ENCODE measurements at regions of chr5 and their contacts with region 1.

Region 1: DNA sequence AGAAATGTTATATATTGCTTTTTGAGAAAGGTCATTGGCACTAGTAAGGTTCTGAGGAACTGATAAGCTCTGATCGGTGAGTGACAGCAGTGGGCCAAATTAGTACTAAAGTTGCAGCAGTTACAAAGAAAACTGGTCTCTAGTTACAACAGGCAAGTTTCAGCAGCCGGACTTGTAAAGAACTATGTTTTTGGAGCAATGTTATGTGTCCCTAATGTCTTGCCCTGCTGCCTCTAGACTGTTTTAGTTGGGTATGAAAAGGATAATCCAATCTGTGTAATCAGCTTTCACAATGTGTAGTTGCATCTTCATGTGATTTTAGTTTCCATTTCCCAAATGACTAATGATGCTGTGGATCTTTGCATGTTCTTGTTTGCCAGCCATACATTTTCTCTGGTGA is 113.5 kb downstream of the CAMK4 start:
- DNase-seq: peak; percentile 10
- H3K4me3 Mint-ChIP-seq: peak overlapping the region; percentile 11
- H3K27ac Mint-ChIP-seq: peak overlapping the region; percentile 78
- H3K4me1 Mint-ChIP-seq: peaks cover 74% of the 10 kb centered on the region
- H3K27me3 Mint-ChIP-seq: no peaks in the 10 kb centered on the region

Region 2: DNA sequence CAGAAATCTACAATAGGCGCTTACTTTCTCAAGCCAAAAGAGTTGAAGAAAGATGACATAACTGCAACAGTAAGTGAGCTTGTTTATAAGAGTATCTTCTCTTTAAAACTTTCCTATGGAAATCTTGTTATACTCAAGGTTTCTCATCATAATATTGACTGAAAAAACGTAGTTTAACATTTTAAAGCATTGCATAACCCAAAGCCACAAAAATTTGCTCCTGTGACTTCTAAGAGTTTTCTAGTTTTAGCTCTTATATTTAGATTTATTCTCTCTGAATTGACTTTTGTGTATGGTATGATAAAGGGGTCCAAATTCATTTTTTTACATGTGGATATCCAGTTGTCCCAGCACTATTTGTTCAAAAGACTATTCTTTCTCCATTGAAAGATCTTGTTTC is 230.3 kb before region 1 on chr5:
- CTCF ChIA-PET with region 1: no interaction called
- intact Hi-C with region 1: no loop called
- DNase-seq: no peak
- H3K4me3 Mint-ChIP-seq: no peak overlapping the region
- H3K27ac Mint-ChIP-seq: no peak overlapping the region
- H3K4me1 Mint-ChIP-seq: peaks cover 4% of the 10 kb centered on the region
- H3K27me3 Mint-ChIP-seq: no peaks in the 10 kb centered on the region

Region 3: DNA sequence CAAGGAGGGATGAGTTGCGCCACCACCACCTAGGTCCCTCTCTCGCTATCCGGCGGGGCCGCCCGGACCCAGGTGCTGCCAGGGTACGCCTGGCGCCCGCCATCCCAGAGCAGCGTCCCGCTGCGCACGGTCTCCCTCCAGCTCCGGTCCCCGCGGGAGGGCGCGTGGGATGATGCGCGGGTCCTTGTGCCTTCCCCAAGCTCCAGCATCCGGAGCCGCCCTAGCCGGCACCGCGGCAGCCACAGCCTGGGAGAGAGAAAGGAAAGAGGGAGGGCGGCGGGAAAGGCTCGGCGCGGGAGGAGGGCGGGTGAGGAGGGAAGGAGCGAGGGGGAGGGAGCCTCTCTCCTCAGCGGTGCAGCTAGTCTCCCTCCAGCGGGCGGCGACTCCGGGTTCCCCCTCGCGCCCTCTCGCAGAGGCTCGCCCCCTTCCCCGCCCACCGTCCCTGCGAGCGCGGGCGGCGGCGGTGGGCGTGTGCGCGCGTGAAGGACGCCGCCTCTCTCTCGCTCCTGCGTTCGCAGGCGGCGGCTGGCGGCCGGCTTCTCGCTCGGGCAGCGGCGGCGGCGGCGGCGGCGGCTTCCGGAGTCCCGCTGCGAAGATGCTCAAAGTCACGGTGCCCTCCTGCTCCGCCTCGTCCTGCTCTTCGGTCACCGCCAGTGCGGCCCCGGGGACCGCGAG is 113.7 kb before region 1 on chr5 and contains the start of gene CAMK4:
- CTCF ChIA-PET with region 1: no interaction called
- intact Hi-C with region 1: loop called (anchors 2 kb)
- DNase-seq: peak; percentile 75
- H3K4me3 Mint-ChIP-seq: peak within 1 kb of the TSS; percentile 95
- H3K27ac Mint-ChIP-seq: peak within 1 kb of the TSS; percentile 97
- H3K4me1 Mint-ChIP-seq: peaks cover 25% of the 10 kb centered on the region
- H3K27me3 Mint-ChIP-seq: no peaks in the 10 kb centered on the region
- total RNA-seq, gene CAMK4: 40.6 to 44.4 TPM

Region 4: DNA sequence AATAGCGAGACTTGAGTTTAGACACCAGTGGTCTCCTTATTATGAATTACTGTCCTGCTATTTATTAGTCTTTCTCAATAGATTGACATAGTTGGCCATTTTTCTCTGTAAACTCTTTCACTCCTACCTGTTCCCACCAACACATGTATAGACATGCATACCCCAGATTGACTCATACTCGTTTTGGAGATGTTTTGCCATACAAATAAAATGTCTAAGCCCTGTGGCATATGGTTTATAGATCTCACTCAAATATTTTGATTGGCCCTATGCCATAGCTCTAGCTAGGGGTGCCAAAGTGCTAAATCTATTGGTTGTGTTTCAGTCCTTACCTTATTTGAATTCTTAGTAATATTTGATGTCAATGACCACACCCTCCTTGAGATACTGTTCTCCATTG is 71.2 kb before region 1 on chr5:
- CTCF ChIA-PET with region 1: no interaction called
- intact Hi-C with region 1: loop called (anchors 2 kb)
- DNase-seq: no peak
- H3K4me3 Mint-ChIP-seq: no peak overlapping the region
- H3K27ac Mint-ChIP-seq: peak overlapping the region; percentile 4
- H3K4me1 Mint-ChIP-seq: peaks cover 50% of the 10 kb centered on the region
- H3K27me3 Mint-ChIP-seq: no peaks in the 10 kb centered on the region

Region 5: DNA sequence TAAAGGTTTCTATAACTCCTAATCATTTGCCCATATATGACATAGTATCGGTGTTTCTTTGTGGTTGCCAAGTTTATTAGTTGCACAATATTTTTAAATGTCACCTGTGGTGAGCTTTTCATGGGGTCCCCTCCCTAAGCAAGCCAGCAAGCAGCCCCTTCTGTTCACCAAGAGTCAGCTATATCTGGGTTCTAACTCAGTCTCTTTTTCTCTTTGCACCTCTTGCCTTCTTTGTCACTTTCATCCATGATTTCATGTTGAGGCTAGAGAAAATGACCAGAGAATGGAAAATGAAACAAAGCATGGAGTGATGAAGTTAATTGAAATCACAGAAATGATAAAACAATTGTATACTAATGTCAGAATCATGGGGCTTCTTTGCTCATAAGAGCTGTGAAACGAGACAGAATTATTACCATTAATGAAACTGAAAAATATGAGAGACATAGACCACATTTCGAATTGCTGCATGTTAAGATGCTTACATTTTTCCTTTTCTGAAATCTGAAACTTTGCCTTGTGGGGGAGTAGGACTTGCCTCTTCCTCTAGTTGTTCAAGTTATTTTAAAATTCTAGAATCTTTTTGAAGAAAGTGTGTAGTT is 37.8 kb before region 1 on chr5:
- CTCF ChIA-PET with region 1: no interaction called
- intact Hi-C with region 1: loop called (anchors 5 kb)
- DNase-seq: no peak
- H3K4me3 Mint-ChIP-seq: peak overlapping the region; percentile 1
- H3K27ac Mint-ChIP-seq: peak overlapping the region; percentile 71
- H3K4me1 Mint-ChIP-seq: peaks cover 41% of the 10 kb centered on the region
- H3K27me3 Mint-ChIP-seq: no peaks in the 10 kb centered on the region

Region 6: DNA sequence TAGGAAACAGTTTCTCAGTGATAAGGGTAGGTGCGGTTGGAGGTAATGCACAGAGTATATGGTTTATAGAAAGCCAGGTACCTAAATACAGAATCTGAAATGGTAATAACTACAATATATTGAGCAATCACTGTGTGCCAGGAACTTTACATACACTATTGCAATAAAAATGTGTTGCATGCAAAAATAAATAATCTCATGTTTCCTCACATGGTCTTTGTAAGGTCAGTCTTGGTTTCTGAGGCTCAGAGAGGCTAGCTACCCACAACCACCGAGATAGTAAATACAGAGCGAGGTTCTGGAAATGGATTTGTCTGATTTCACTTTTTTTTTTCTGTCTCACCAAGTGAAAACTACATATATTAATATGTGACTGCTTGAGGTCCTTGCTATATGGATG is 15.3 kb after region 1 on chr5:
- CTCF ChIA-PET with region 1: no interaction called
- intact Hi-C with region 1: loop called (anchors 1 kb)
- DNase-seq: no peak
- H3K4me3 Mint-ChIP-seq: no peak overlapping the region
- H3K27ac Mint-ChIP-seq: no peak overlapping the region
- H3K4me1 Mint-ChIP-seq: peaks cover 26% of the 10 kb centered on the region
- H3K27me3 Mint-ChIP-seq: no peaks in the 10 kb centered on the region